ENCODE measurements at regions of chr9 and their contacts with region 1.

Region 1: DNA sequence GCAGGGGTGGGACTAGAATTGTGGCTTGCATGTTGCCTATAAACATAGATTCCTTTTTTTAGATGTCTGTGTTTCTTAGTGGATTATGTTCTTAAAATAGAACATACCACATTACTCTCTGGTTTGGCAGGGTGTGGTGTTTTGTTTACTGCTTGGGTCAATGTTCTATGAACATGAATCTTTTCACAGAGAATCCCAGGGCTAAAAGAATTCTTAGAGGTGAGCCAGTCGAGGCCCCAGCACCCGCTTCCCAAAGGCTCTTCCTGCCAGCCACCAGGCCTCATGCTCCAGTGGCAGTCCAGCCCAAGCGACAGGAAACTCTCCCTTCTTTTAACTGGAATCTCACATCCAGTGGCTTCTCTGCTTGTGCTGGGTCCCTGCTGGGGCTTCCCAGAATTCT is 126.6 kb downstream of the C9orf152 start:
- DNase-seq: no peak
- ATAC-seq: no peak
- H3K4me3 ChIP-seq: no peak overlapping the region
- H3K4me3 Mint-ChIP-seq: no peak overlapping the region
- H3K27ac ChIP-seq: no peak overlapping the region
- H3K27ac Mint-ChIP-seq: no peak overlapping the region
- H3K4me1 ChIP-seq: peaks cover 4% of the 10 kb centered on the region
- H3K4me1 Mint-ChIP-seq: peaks cover 0 to 6% of the 10 kb centered on the region in 2 donors
- H3K27me3 ChIP-seq: no peaks in the 10 kb centered on the region
- H3K27me3 Mint-ChIP-seq: no peaks in the 10 kb centered on the region
- CTCF ChIP-seq: no peak

Region 2: DNA sequence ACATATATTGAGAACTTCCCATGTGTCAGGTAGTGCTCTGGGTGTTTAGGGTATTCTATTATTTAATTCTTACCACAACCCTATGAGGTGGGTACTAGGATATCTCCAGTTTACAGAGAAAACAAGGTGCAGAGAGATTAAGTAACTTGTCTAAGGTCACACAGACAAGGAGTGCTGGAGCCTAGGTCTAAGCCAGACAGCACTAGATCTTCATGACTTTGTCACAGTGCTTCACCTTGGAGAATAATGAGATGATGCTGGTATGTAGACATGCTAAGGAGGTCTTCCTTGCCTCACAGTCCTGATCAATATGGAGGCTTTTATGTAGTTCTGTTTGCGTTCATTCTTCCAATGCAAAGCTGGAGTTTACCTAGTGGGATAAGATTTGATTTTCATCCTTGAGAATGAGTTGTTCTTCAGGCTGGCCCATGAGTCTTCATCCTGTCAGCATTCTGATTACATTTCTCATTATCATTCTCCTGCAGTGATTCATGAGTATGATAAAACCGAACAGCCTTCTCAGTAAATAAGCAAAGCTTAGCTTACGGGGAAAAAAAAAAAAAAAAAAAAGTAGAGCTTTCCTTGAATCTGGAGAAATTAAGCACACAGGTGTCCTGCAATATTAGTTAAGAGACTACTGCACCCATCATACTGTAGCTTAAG is 49.8 kb before region 1 on chr9:
- intact Hi-C with region 1: loop called (anchors 10 kb)
- DNase-seq: no peak
- ATAC-seq: no peak
- H3K4me3 ChIP-seq: no peak overlapping the region
- H3K4me3 Mint-ChIP-seq: no peak overlapping the region
- H3K27ac ChIP-seq: no peak overlapping the region
- H3K27ac Mint-ChIP-seq: no peak overlapping the region
- H3K4me1 ChIP-seq: no peaks in the 10 kb centered on the region
- H3K4me1 Mint-ChIP-seq: no peaks in the 10 kb centered on the region
- H3K27me3 ChIP-seq: no peaks in the 10 kb centered on the region
- H3K27me3 Mint-ChIP-seq: peaks cover 11 to 25% of the 10 kb centered on the region in 2 donors
- CTCF ChIP-seq: no peak

Region 3: DNA sequence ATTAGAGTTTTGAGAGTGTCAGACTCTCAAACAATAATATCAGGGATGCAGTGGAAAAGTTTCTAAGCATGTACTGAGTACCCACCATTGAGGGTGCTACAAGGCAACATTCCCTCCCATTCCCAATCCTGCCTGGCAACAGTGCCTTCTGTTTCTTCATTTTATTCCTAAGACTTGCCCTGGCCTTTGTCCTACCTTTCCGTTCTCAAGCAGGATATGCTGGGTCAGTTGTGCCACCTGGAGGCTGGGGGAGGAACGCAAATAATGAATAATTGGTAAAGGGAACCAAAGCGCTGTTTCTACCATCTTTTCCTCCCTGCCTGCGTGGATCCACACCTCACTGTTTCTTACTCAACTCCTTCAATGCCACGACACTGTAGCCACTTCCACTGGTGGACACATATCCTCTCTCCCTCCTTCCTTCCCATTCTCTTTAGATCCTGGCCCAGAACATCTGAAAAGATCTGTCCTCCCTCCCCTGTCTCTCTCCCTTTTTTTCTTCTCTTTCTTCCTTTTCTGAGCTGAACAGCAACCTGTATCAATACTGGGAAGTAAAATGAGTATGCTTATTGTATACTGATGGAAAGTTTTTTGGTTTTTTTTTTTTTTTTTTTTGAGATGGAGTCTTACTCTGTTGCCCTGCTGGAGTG is 23.0 kb before region 1 on chr9:
- intact Hi-C with region 1: no loop called
- DNase-seq: peak in 1 of 2 donors; percentile 73
- ATAC-seq: peak in 1 of 3 donors; percentile 40
- H3K4me3 ChIP-seq: no peak overlapping the region
- H3K4me3 Mint-ChIP-seq: no peak overlapping the region
- H3K27ac ChIP-seq: no peak overlapping the region
- H3K27ac Mint-ChIP-seq: no peak overlapping the region
- H3K4me1 ChIP-seq: no peaks in the 10 kb centered on the region
- H3K4me1 Mint-ChIP-seq: no peaks in the 10 kb centered on the region
- H3K27me3 ChIP-seq: no peaks in the 10 kb centered on the region
- H3K27me3 Mint-ChIP-seq: peaks cover 0 to 3% of the 10 kb centered on the region in 2 donors
- CTCF ChIP-seq: no peak